ENCODE measurements at regions of chr5 and their contacts with region 1.

Region 1: GRCh38 chr5:176619203-176619568 is 9.2 kb upstream of the GPRIN1 start:
- DNase-seq: peak; percentile 91
- H3K4me3 Mint-ChIP-seq: no peak overlapping the region
- H3K27ac Mint-ChIP-seq: no peak overlapping the region
- H3K4me1 Mint-ChIP-seq: peaks cover 16% of the 10 kb centered on the region
- H3K27me3 Mint-ChIP-seq: peaks cover 59% of the 10 kb centered on the region

Region 2: DNA sequence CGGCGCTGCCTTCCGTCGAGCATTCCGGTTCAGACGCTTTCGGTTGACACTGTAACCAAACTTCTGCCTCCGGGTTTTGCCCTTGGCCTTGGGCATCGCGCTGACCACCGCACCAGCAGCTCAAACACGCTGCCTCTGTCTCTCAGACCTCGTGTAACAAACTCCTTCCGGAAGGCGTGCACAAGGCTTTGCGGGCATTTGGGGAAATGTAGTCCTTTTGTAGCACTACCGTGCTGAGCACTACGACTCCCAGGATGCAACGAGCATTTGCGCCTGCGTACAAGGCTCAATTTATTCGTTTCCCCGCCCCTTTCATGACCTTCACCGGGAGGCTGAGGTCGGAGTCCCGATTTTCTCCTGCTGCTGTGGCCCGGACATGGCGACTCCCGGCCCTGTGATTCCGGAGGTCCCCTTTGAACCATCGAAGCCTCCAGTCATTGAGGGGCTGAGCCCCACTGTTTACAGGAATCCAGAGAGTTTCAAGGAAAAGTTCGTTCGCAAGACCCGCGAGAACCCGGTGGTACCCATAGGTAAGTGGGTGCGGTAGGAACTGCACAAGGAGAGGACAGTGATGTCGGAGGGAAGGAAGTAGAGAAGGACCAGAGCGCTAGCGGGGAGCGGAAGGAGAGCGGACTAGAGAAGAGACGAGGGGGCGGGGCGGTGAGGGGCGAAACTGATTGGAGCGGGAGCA is 230.6 kb before region 1 on chr5 and contains the starts of genes HIGD2A and NOP16:
- CTCF ChIA-PET with region 1: no interaction called
- POLR2A ChIA-PET with region 1: no interaction called
- intact Hi-C with region 1: no loop called
- DNase-seq: peak; percentile 100
- H3K4me3 Mint-ChIP-seq: peak within 1 kb of the TSS; percentile 99
- H3K27ac Mint-ChIP-seq: peak within 1 kb of the TSS; percentile 98
- H3K4me1 Mint-ChIP-seq: peaks cover 27% of the 10 kb centered on the region
- H3K27me3 Mint-ChIP-seq: no peaks in the 10 kb centered on the region
- total RNA-seq, gene HIGD2A: 112 to 119 TPM
- total RNA-seq, gene NOP16: 52.5 to 57.6 TPM

Region 3: DNA sequence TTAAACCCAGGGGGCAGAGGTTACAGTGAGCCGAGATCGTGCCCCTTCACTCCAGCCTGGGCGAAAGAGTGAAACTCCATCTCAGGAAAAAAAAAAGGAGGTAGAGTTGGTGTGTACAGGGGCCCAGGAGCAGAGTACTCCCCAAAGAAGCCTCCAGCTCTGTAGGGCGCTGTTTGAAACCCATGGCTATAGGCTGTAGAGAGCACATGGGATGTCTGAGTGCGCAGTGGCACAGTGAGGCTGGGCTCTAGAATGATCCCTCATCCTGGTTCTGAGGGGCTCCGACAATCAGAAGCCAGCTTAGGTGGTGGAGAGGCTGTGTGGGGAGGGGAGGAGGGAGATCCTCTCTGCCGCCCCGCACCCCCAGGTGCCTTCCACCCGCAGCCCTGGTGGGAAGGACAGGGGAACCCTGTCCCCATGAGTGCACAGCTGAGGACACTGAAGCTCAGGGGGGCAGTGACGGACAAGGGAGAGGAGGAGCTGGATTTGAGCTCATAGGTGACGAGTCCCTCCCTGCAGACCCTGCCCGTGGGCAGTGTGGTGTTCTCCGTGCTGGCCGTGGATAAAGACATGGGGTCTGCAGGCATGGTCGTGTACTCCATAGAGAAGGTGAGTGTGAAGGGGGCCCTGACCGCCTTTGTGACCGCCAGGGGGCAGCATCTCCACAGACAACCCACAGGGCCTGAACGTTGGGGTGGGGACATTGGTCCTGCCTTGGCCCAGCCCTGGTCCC is 45.5 kb before region 1 on chr5:
- CTCF ChIA-PET with region 1: interaction called, 4 read pairs
- POLR2A ChIA-PET with region 1: no interaction called
- intact Hi-C with region 1: loop called (anchors 1 kb)
- DNase-seq: peak; percentile 84
- H3K4me3 Mint-ChIP-seq: no peak overlapping the region
- H3K27ac Mint-ChIP-seq: no peak overlapping the region
- H3K4me1 Mint-ChIP-seq: no peaks in the 10 kb centered on the region
- H3K27me3 Mint-ChIP-seq: peaks cover 2% of the 10 kb centered on the region

Region 4: DNA sequence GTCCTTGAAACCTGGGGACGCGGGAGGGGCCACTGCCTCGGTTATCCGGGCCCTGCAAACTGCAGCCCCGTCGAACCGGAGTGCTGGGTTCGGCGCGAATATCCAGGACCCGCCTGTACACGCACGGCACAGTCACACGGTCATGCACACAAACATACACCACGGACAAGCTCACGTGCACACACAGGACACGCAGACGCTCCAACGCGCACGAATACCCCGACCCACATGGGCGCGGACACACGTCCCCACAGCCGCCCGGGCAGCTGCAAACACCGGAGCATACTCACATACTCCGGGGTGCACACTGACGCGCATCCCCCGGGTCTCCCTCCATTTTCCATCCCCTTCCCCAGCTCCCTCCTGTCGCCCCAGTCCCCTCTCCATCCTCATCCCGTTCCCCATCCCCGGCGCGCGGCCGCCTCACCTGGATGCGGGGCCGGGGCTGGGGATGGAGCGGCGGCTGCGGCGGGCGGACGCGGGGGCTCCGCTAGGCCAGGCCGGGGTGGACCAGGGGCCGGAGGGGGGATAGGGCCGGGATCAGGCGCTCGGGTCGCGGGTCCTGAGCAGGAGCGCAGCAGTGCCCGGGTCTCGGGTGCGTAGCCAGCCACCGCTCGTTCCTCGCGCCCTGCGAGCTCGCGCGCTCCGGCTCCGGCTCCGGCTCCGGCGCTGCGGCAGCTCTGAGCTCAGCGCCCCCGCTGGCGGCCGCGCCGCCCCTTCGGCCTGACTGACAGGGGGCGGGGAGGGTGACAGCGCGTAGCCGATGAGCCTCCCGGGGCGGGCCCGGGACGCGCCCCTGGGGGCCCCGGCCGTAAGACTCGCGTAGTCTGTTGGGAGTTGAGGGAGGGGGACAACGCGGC is 10.9 kb after region 1 on chr5 and contains the starts of genes EIF4E1B and SNCB:
- CTCF ChIA-PET with region 1: interaction called, 5 read pairs
- POLR2A ChIA-PET with region 1: no interaction called
- intact Hi-C with region 1: loop called (anchors 1 kb)
- DNase-seq: peak; percentile 67
- H3K4me3 Mint-ChIP-seq: no peak within 1 kb of the TSS
- H3K27ac Mint-ChIP-seq: no peak within 1 kb of the TSS
- H3K4me1 Mint-ChIP-seq: peaks cover 13% of the 10 kb centered on the region
- H3K27me3 Mint-ChIP-seq: peaks cover 69% of the 10 kb centered on the region
- total RNA-seq, gene EIF4E1B: not detected
- total RNA-seq, gene SNCB: 0.31 TPM in 1 of 2 experiments, not detected in the other

Measured in activated CD4-positive, alpha-beta memory T cell treated with anti-CD3 and anti-CD28 coated beads for 36 hours (primary cell).